ENCODE measurements at regions of chr6 and their contacts with region 1.

Region 1: DNA sequence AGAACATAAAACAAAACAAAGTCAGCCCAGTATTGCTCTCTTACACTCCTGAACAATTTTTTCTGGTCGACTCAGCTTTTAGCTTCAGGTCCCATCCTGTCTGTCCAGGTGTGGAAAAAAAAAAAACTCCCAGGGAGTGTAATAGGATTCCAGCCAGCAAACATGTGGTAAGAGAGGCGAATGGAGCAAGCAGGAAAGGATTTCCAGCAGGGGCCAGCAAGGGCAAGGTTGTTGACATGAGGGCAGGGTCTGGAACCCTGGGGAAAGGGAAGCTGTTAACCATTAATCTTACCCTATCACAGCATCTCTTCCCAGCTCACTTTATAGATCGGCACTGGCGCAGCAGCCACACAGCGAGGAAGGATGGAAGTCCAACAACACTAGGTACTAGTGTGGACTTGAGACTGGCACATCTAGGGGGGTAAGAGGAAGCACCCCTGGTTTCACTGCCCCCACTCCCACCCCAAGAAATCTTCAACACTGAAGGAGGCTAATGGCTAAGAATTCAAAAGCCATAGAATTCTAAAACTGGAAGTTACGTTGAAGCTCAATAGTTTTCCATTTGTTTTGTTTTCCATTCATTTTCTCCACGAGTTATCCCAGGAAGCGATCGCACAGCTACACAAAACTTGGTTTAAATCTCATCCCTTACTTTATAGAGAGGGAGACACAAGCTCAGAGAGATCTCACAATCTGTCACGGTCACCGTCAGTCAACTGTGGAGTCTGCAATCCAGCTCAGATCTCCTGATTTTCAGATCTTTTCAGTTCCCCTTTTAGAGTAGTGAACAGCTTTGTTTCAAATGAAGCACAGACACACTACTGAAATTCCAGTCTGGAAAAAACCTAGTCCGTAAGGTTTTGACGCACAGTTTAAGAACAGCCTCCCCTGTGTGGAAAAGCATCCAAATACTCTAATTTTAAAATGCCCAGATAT is 53.3 kb downstream of the SLC22A23 start:
- DNase-seq: peak; percentile 99
- ATAC-seq: peak; percentile 98
- H3K4me3 ChIP-seq: peak overlapping the region in 1 of 3 experiments; percentile 18; a peak in 2 of 6 replicates
- H3K27ac ChIP-seq: peak overlapping the region; percentile 84
- H3K4me1 ChIP-seq: peaks cover 100% of the 10 kb centered on the region
- H3K27me3 ChIP-seq: no peaks in the 10 kb centered on the region
- CTCF ChIP-seq: peak; percentile 60
- EP300 ChIP-seq: peak; percentile 93 to 99
- POLR2A ChIP-seq: peak; percentile 92 to 95
- RAD21 ChIP-seq: peak; percentile 68

Region 2: GRCh38 chr6:3356056-3356761 is 47.3 kb before region 1 on chr6:
- CTCF ChIA-PET with region 1: no interaction called
- POLR2A ChIA-PET with region 1: interaction called, 50 read pairs
- in situ Hi-C with region 1: no loop called
- intact Hi-C with region 1: loop called (anchors 1 kb)
- DNase-seq: peak; percentile 65
- ATAC-seq: peak; percentile 56
- H3K4me3 ChIP-seq: peak overlapping the region; percentile 12 to 47 (median 17); a peak in 5 of 6 replicates
- H3K27ac ChIP-seq: peak overlapping the region; percentile 98
- H3K4me1 ChIP-seq: peaks cover 89% of the 10 kb centered on the region
- H3K27me3 ChIP-seq: no peaks in the 10 kb centered on the region
- CTCF ChIP-seq: no peak
- EP300 ChIP-seq: no peak
- POLR2A ChIP-seq: peak in 1 of 2 experiments; percentile 42; a peak in 1 of 4 replicates
- RAD21 ChIP-seq: no peak

Region 3: GRCh38 chr6:3363296-3364025 is 40.0 kb before region 1 on chr6:
- CTCF ChIA-PET with region 1: no interaction called
- POLR2A ChIA-PET with region 1: interaction called, 32 read pairs
- in situ Hi-C with region 1: no loop called
- intact Hi-C with region 1: no loop called
- DNase-seq: peak; percentile 43
- ATAC-seq: no peak
- H3K4me3 ChIP-seq: no peak overlapping the region
- H3K27ac ChIP-seq: peak overlapping the region; percentile 11
- H3K4me1 ChIP-seq: peaks cover 95% of the 10 kb centered on the region
- H3K27me3 ChIP-seq: no peaks in the 10 kb centered on the region
- CTCF ChIP-seq: no peak
- EP300 ChIP-seq: no peak
- POLR2A ChIP-seq: no peak
- RAD21 ChIP-seq: no peak

Region 4: GRCh38 chr6:3372007-3372846 is 31.3 kb before region 1 on chr6:
- CTCF ChIA-PET with region 1: no interaction called
- POLR2A ChIA-PET with region 1: interaction called, 271 read pairs
- in situ Hi-C with region 1: no loop called
- intact Hi-C with region 1: no loop called
- DNase-seq: no peak
- ATAC-seq: no peak
- H3K4me3 ChIP-seq: no peak overlapping the region
- H3K27ac ChIP-seq: peak overlapping the region; percentile 85
- H3K4me1 ChIP-seq: peaks cover 100% of the 10 kb centered on the region
- H3K27me3 ChIP-seq: no peaks in the 10 kb centered on the region
- CTCF ChIP-seq: peak; percentile 56
- EP300 ChIP-seq: no peak
- POLR2A ChIP-seq: no peak
- RAD21 ChIP-seq: peak; percentile 19; the same call in 1 of the 2 replicates

Region 5: GRCh38 chr6:3377536-3378397 is 25.7 kb before region 1 on chr6:
- CTCF ChIA-PET with region 1: no interaction called
- POLR2A ChIA-PET with region 1: interaction called, 271 read pairs
- in situ Hi-C with region 1: no loop called
- intact Hi-C with region 1: loop called (anchors 1 kb)
- DNase-seq: peak; percentile 79
- ATAC-seq: peak; percentile 11
- H3K4me3 ChIP-seq: no peak overlapping the region; a peak in 1 of 6 replicates
- H3K27ac ChIP-seq: peak overlapping the region; percentile 87
- H3K4me1 ChIP-seq: peaks cover 100% of the 10 kb centered on the region
- H3K27me3 ChIP-seq: no peaks in the 10 kb centered on the region
- CTCF ChIP-seq: no peak; the same call in 1 of the 2 replicates
- EP300 ChIP-seq: peak in 1 of 2 experiments; percentile 80; a peak in 2 of 4 replicates
- POLR2A ChIP-seq: 0 out of 4 replicates have a peak, but pooled peaks of 1 of the 2 experiments have one; percentile 2
- RAD21 ChIP-seq: no peak; the same call in 1 of the 2 replicates

Region 6: DNA sequence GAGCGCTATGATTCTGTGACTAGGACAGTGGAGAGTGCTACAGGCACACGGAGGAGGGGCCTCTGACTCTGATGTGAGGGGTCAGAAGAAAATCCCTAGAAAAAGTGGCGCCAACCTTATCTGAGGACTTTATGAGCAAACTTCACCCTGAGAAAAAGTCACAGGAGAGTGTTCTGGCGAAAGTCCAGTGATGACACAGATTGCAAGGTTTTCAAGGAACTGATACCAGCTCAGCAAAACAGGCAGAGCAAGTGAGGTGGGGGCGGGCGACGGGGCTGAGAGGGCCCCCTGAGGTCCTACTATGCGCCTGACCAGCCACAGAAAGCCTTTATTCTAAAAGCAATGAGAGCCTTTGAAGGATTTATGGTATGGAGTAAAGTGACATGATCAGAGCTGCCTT is 20.0 kb before region 1 on chr6:
- CTCF ChIA-PET with region 1: no interaction called
- POLR2A ChIA-PET with region 1: interaction called, 271 read pairs
- in situ Hi-C with region 1: no loop called
- intact Hi-C with region 1: loop called (anchors 1 kb)
- DNase-seq: peak; percentile 88
- ATAC-seq: no peak
- H3K4me3 ChIP-seq: no peak overlapping the region
- H3K27ac ChIP-seq: peak overlapping the region; percentile 95
- H3K4me1 ChIP-seq: peaks cover 80% of the 10 kb centered on the region
- H3K27me3 ChIP-seq: no peaks in the 10 kb centered on the region
- CTCF ChIP-seq: 0 out of 2 replicates have a peak, but pooled peaks have one; percentile 3
- EP300 ChIP-seq: peak in 1 of 2 experiments; percentile 81; a peak in 2 of 4 replicates
- POLR2A ChIP-seq: no peak
- RAD21 ChIP-seq: 0 out of 2 replicates have a peak, but pooled peaks have one; percentile 30

Measured in HepG2 (cell line).